ENCODE measurements at regions of chr2 and their contacts with region 1.

Region 1: DNA sequence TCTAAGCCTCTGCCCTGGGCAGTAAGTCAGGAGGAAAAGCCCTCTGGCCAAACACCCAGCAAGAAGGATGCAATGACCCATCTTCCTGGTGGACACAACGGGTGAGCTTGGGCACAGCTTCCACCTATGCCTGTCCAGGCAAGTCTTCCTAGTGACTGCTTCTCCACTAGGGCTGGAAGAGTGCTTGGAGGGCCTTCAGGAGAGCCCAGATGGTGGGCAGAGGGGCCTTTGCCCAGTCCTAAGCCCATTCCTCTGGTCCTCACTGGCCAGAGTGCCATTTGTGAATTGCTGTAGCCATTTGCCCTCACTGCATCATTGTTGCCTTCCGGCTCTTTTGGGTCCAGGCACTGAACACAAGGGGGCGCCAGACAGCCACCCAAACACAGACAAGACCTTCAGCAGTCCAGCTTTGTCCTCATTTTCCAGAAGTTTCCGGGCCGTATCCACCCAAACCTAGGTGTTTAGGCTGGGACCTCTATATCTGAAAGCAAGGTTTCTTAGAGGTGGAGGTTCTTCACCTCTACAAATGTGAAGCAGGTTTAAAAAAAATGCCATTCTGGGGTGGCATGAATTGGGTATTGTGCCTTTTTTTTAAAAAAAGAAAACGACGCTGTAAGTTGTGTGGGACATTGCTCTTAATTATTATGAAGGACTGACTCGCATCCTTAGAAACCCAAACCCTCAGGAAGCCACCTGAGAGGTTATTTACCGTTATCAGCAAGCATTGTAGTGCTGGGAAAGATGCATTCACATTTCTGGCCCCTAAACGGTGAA is 29.5 kb downstream of the PAX8 start:
- DNase-seq: peak; percentile 44 to 74
- ATAC-seq: peak; percentile 66 to 71
- H3K4me3 ChIP-seq: no peak overlapping the region
- H3K27ac ChIP-seq: no peak overlapping the region
- H3K4me1 ChIP-seq: peaks cover 0 to 3% of the 10 kb centered on the region in 2 donors
- H3K27me3 ChIP-seq: no peaks in the 10 kb centered on the region
- CTCF ChIP-seq: peak; percentile 74 to 92 (median 87)
- POLR2A ChIP-seq: no peak

Region 2: GRCh38 chr2:113185658-113186432 is 63.3 kb before region 1 on chr2:
- in situ Hi-C with region 1: no loop called
- intact Hi-C with region 1: no loop called
- DNase-seq: no peak
- ATAC-seq: no peak
- H3K4me3 ChIP-seq: no peak overlapping the region
- H3K27ac ChIP-seq: no peak overlapping the region
- H3K4me1 ChIP-seq: no peaks in the 10 kb centered on the region
- H3K27me3 ChIP-seq: no peaks in the 10 kb centered on the region
- CTCF ChIP-seq: no peak
- POLR2A ChIP-seq: no peak

Region 3: DNA sequence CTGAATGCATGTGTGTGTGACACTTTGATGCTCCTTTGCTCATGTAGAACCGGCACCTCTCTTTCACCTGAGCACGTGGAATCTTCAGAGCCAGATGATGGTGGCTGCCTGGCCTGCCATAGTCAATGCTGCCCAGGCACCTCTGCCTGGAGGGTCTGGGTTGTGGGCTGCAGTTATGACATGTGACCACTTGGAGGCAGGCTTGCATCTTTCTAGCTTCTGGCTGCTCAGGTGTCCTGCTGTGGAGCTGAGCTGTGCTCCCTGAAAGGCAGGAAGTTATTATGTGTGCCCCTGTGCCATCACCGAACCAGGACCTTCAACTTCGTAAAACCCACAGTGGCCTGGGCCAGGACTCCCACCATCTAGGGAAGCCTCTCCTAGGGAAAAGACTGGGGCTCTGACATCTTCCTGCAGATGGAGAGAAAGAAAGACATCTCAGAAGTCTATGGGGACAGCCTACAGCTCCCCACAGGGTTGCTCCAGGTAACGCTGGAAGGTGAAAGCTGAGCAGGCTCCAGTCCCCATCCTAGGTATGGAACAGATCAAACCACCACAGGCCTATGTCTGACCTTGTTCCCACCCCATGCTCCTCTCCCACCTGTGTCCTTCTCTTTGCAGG is 45.2 kb before region 1 on chr2:
- in situ Hi-C with region 1: no loop called
- intact Hi-C with region 1: loop called (anchors 5 kb)
- DNase-seq: peak; percentile 43 to 62
- ATAC-seq: peak; percentile 82 to 85
- H3K4me3 ChIP-seq: no peak overlapping the region
- H3K27ac ChIP-seq: no peak overlapping the region
- H3K4me1 ChIP-seq: peaks cover 0 to 3% of the 10 kb centered on the region in 2 donors
- H3K27me3 ChIP-seq: no peaks in the 10 kb centered on the region
- CTCF ChIP-seq: peak; percentile 65 to 82 (median 72)
- POLR2A ChIP-seq: no peak

Region 4: GRCh38 chr2:113309655-113310387 is 60.6 kb after region 1 on chr2:
- in situ Hi-C with region 1: no loop called
- intact Hi-C with region 1: loop called (anchors 10 kb)
- DNase-seq: peak; percentile 63 to 85
- ATAC-seq: peak; percentile 85 to 89
- H3K4me3 ChIP-seq: no peak overlapping the region
- H3K27ac ChIP-seq: peak overlapping the region; percentile 62 to 82 (median 74)
- H3K4me1 ChIP-seq: peaks cover 8 to 19% of the 10 kb centered on the region in 2 donors
- H3K27me3 ChIP-seq: no peaks in the 10 kb centered on the region
- CTCF ChIP-seq: no peak
- POLR2A ChIP-seq: no peak